AG04449 (cell line): ENCODE measurements at regions of chrX and their contacts with region 1.

Region 1: DNA sequence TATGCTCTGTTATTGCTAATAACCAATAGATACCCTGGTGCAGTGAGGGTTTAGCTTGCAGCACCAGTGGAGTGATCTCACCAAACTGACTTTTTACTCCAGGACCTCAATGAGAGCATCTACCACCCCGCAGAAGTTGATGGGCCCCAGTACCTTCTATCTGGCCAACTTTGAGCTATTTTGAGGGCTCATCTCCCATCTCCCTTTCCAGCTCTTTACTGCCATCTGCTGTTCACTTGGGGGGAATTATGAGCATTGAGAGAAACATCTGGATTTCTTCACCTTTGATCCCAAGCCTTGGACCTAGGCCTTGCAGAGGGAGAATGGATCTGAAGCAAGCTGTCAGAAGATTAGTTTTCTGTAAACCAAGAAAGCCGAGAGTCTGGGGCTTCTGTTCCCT is 143.6 kb downstream of the TMEM164 start:
- DNase-seq: no peak
- H3K4me3 ChIP-seq: no peak overlapping the region
- CTCF ChIP-seq: peak; percentile 53

Region 2: DNA sequence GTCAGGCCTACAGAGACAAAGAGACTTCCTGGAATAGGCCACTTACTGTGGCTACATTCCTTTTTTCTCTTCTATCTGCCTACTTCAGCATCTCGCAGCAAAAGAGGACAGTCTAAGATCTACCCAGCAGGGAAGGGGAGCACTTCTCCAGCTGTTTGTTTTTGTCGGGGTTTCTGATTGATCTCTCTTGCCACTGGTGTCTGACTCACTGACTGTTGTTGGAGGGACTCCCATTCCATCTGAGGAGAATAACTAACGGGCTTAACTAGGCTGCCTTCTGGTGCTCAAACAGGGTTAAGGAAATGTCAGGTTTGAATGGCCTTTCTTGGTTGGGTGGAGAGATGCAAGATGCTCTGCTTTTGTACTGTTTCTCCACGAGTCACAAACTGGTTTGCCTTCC is 243.9 kb before region 1 on chrX:
- CTCF ChIA-PET with region 1: interaction called, 125 read pairs
- POLR2A ChIA-PET with region 1: no interaction called
- DNase-seq: no peak
- H3K4me3 ChIP-seq: no peak overlapping the region
- CTCF ChIP-seq: no peak

Region 3: GRCh38 chrX:110046001-110046400 is 100.5 kb before region 1 on chrX:
- CTCF ChIA-PET with region 1: interaction called, 12 read pairs
- POLR2A ChIA-PET with region 1: no interaction called
- DNase-seq: no peak
- H3K4me3 ChIP-seq: no peak overlapping the region
- CTCF ChIP-seq: no peak

Region 4: DNA sequence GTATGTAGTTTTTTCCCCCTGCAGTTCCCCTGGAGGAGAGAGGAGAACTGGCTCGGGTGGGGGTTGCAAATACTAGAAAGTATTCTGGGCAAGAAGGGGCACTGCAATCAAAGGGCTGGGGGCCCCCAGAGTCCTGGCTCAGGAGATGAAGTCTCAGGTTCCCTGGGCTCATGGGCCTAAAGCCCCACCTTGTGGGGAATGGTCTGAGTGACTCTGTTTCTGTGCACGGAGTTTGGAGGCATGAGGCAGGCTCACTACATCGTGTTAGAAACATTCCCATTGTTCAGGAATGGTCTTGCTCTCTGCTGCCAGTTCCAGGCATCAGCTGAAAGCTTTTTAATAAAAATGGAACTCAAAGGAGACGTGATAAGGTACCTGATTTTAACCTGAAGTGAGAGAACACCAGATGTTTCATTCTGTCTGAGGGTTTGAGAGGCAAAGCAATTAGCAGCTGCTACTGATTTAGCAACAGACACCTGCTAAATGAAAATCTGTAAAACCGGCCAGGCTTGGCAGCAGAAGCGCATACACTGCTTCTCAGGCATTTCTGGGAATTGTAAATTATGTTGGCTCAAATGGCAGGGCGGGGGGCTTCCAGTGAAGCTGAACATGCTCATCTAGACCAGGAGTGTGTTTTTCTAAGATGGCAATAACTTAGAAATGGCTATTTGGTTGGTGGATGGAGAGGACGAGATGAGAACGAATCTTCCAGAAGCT is 20.9 kb before region 1 on chrX:
- CTCF ChIA-PET with region 1: interaction called, 17 read pairs
- POLR2A ChIA-PET with region 1: no interaction called
- DNase-seq: no peak
- H3K4me3 ChIP-seq: no peak overlapping the region
- CTCF ChIP-seq: peak; percentile 17

Region 5: GRCh38 chrX:110402479-110403230 is 256.1 kb after region 1 on chrX:
- CTCF ChIA-PET with region 1: interaction called, 970 read pairs
- POLR2A ChIA-PET with region 1: no interaction called
- DNase-seq: no peak
- H3K4me3 ChIP-seq: no peak overlapping the region
- CTCF ChIP-seq: no peak